ENCODE measurements at regions of chr7 and their contacts with region 1.

Region 1: GRCh38 chr7:106461993-106462859 is 177.4 kb upstream of the NAMPT start:
- DNase-seq: no peak
- H3K4me3 Mint-ChIP-seq: no peak overlapping the region
- H3K27ac Mint-ChIP-seq: peak overlapping the region; percentile 7
- H3K4me1 Mint-ChIP-seq: peaks cover 25% of the 10 kb centered on the region
- H3K27me3 Mint-ChIP-seq: no peaks in the 10 kb centered on the region

Region 2: DNA sequence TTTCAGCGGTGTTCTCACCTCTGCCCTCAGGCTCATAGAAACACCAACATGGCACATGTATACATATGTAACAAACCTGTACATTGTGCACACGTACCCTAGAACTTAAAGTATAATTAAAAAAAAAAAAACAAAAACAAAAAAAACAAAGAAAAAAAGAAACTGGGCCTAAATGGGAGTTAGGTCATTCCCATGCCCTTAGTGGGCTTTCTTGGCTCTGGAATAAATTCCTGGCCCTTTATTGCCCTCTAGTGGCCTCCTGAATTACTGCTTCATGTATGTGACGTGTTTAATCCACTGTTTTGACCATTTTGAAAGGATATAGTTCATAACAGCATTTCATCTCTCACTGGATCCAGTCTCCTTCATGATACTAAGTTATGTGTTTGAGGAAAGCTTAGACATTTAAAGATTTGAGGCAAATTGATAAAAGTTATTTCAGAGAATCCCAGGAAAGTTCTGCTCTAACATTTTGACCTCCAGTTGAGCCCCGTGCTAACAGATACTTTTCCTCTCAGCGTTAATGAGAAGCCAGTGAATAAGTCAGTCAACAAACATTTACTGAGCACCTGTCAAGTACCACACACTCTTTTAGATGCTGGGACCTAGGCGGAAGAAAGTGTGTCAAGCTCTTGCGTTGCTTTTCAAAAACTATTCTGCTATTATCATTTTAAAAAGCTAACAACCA is 295.4 kb before region 1 on chr7:
- CTCF ChIA-PET with region 1: interaction called, 11 read pairs
- POLR2A ChIA-PET with region 1: no interaction called
- intact Hi-C with region 1: no loop called
- DNase-seq: peak; percentile 21
- H3K4me3 Mint-ChIP-seq: no peak overlapping the region
- H3K27ac Mint-ChIP-seq: peak overlapping the region; percentile 24
- H3K4me1 Mint-ChIP-seq: peaks cover 3% of the 10 kb centered on the region
- H3K27me3 Mint-ChIP-seq: peaks cover 10% of the 10 kb centered on the region

Region 3: DNA sequence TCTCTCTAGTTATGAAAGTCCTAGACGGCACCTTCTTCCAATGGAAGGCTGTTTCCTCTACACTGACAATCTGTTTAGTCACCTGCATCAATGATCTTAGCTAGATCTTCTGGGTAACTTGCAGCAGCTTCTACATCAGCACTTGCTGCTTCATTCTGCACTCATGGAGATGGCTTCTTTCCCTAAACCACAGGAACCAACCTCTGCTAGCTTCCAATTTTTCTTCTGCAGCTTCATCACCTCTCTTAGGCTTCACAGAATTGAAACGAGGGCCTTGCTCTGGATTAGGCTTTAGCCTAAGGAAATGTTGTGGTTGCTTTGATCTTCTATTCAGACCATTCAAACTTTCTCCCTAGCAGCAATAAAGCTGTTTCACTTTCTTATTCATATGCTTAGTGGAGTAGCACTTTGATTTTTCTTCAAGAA is 202.1 kb before region 1 on chr7:
- CTCF ChIA-PET with region 1: interaction called, 10 read pairs
- POLR2A ChIA-PET with region 1: no interaction called
- intact Hi-C with region 1: loop called (anchors 5 kb)
- DNase-seq: no peak
- H3K4me3 Mint-ChIP-seq: no peak overlapping the region
- H3K27ac Mint-ChIP-seq: peak overlapping the region; percentile 78
- H3K4me1 Mint-ChIP-seq: peaks cover 75% of the 10 kb centered on the region
- H3K27me3 Mint-ChIP-seq: no peaks in the 10 kb centered on the region

Region 4: DNA sequence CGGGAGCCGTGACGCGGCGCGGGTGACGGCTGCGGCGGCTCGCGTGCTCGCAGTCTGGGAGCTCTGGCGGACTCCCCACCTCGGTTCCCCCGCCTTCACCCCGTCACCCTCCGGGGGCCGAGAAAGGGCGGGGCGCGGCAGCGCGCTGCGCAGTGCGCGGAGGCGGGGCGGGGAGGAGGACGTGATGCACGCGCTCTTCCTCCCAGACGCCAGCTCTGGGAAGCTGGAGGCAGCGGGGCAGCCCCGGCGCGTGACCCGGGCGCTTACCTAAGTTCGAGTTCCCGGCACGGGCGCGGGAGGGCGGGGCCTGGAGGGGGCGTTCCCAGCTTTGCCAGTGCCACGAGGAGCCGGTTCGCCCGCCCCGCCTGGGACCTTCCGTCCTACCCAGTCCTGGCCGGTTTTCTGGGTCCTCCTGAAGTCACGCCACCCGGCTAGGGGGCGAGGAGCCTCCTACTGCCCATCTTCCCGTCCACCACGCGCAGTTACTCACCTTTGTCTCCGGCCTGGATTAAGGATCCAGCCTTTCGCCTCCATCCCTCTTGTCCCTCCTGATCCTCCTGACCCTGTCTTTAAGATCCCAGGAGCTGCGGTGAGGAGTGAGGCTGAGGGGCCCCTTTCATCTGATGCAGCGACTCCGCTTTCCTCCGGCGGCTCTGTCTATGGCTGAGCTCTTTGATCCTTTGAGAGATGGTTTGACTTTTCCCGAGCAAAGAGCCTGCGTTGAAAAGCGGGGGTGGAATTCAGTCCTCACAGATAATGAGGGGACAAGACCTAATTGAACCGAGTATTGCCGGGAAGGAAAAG is 177.0 kb before region 1 on chr7:
- CTCF ChIA-PET with region 1: interaction called, 19 read pairs
- POLR2A ChIA-PET with region 1: interaction called, 8 read pairs
- intact Hi-C with region 1: loop called (anchors 5 kb)
- DNase-seq: peak; percentile 100
- H3K4me3 Mint-ChIP-seq: peak overlapping the region; percentile 92
- H3K27ac Mint-ChIP-seq: peak overlapping the region; percentile 99
- H3K4me1 Mint-ChIP-seq: peaks cover 50% of the 10 kb centered on the region
- H3K27me3 Mint-ChIP-seq: peaks cover 2% of the 10 kb centered on the region

Region 5: GRCh38 chr7:106367018-106367420 is 95.2 kb before region 1 on chr7:
- CTCF ChIA-PET with region 1: interaction called, 6 read pairs
- POLR2A ChIA-PET with region 1: no interaction called
- intact Hi-C with region 1: loop called (anchors 5 kb)
- DNase-seq: peak; percentile 9
- H3K4me3 Mint-ChIP-seq: no peak overlapping the region
- H3K27ac Mint-ChIP-seq: peak overlapping the region; percentile 64
- H3K4me1 Mint-ChIP-seq: peaks cover 45% of the 10 kb centered on the region
- H3K27me3 Mint-ChIP-seq: peaks cover 18% of the 10 kb centered on the region

Region 6: DNA sequence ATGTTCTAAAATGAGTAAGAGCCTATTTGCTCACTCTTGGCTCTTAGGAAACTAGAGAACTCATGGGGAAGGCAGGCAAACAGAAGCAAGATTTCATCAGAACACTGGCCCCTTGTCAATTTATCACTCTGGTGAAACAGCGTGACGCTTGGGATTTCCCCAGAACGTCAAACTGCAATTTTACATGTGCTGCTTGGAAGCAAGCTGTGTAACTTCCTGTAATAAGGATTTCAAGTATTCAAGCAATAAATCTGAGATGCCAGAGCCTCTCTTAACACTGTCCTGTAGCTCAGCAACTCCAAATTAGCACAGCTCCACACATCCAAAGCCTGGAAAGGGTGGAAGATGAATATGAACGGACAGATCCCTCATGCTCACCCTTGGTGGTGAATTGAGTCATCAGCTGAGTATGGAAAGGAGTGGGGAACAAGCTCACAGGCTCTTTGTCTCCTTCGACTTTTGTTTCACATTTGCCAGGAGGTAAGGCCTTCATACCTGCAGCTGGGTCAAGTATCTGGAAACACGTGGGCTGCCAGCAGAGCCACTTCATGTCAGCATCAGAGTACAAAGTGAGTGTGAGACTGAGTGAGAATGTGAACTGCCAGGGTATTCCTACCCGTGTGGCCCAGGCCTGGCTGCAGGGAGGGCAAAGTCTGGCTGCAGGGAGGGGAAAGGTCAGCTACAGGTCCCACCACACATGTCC is 37.1 kb before region 1 on chr7:
- CTCF ChIA-PET with region 1: interaction called, 15 read pairs
- POLR2A ChIA-PET with region 1: interaction called, 4 read pairs
- intact Hi-C with region 1: loop called (anchors 2 kb)
- DNase-seq: peak; percentile 91
- H3K4me3 Mint-ChIP-seq: peak overlapping the region; percentile 65
- H3K27ac Mint-ChIP-seq: peak overlapping the region; percentile 97
- H3K4me1 Mint-ChIP-seq: peaks cover 81% of the 10 kb centered on the region
- H3K27me3 Mint-ChIP-seq: no peaks in the 10 kb centered on the region

Region 7: GRCh38 chr7:107150375-107151073 is 688.3 kb after region 1 on chr7:
- CTCF ChIA-PET with region 1: no interaction called
- POLR2A ChIA-PET with region 1: no interaction called
- intact Hi-C with region 1: no loop called
- DNase-seq: peak; percentile 81
- H3K4me3 Mint-ChIP-seq: no peak overlapping the region
- H3K27ac Mint-ChIP-seq: no peak overlapping the region
- H3K4me1 Mint-ChIP-seq: peaks cover 6% of the 10 kb centered on the region
- H3K27me3 Mint-ChIP-seq: no peaks in the 10 kb centered on the region

Measured in activated CD4-positive, alpha-beta memory T cell treated with anti-CD3 and anti-CD28 coated beads for 36 hours (primary cell).